ENCODE measurements at regions of chr10 and their contacts with region 1.

Region 1: GRCh38 chr10:45249978-45250693 is 65.3 kb downstream of the OR13A1 start:
- DNase-seq: no peak
- ATAC-seq: peak; percentile 78
- H3K4me3 Mint-ChIP-seq: peak overlapping the region; percentile 73
- H3K27ac Mint-ChIP-seq: peak overlapping the region; percentile 92
- H3K4me1 Mint-ChIP-seq: peaks cover 3% of the 10 kb centered on the region; the same call in 1 of the 2 replicates
- H3K27me3 Mint-ChIP-seq: peaks cover 14% of the 10 kb centered on the region
- CTCF ChIP-seq: peak; percentile 62

Region 2: DNA sequence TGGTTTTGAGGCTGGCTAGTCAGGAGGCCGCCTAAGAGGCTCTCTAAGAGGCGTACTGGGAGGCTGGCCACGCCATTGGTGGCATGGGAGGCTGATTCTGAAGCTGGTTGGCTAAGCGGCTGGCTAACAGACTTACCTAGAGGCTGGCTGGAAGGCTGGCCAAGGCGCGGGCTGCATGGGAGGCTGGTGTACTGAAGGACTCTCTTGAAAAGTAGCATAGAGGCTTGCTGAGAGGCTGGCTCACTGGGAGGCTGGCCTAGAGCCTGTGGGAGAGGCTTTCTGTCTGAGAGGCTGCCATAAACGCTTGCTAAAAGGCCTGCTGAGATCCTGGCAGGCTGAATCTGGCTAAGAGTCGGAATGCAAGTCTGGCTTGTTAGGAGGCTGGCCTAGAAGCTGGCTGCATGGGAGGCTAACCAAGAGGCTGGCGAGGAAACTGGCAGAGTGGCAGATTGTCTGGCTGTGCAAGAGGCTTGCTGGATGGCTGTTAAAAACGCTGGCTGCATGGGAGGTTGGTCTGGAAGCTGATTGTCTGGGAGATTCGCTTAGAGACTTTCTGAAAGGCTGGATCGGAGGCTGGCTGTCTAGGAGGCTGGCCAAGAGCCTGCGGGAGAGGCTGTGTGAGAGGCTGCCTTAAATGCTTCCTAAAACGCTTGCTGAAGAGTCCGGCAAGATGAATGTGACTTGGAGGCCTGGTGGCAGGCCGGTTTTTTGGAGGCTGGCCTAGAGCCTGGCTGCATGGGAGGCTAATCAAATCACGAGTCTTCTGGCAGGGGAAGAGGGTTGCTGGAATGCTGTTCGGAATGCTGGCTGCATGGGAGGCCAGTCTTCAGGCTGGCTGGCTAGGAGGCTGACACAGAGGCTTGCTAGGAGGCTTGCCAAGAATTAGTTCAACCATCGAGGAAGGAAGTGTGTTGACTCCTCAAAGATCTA is 68.9 kb before region 1 on chr10:
- CTCF ChIA-PET with region 1: no interaction called
- POLR2A ChIA-PET with region 1: no interaction called
- DNase-seq: no peak
- ATAC-seq: no peak
- H3K4me3 Mint-ChIP-seq: no peak overlapping the region
- H3K27ac Mint-ChIP-seq: no peak overlapping the region
- H3K4me1 Mint-ChIP-seq: no peaks in the 10 kb centered on the region
- H3K27me3 Mint-ChIP-seq: no peaks in the 10 kb centered on the region
- CTCF ChIP-seq: no peak

Region 3: GRCh38 chr10:45235798-45236231 is 14.3 kb before region 1 on chr10:
- CTCF ChIA-PET with region 1: interaction called, 11 read pairs
- POLR2A ChIA-PET with region 1: no interaction called
- DNase-seq: no peak
- ATAC-seq: no peak
- H3K4me3 Mint-ChIP-seq: no peak overlapping the region
- H3K27ac Mint-ChIP-seq: no peak overlapping the region
- H3K4me1 Mint-ChIP-seq: peaks cover under 1% of the 10 kb centered on the region; the same call in 1 of the 2 replicates
- H3K27me3 Mint-ChIP-seq: no peaks in the 10 kb centered on the region
- CTCF ChIP-seq: no peak

Region 4: GRCh38 chr10:45261946-45262345 is 11.8 kb after region 1 on chr10:
- CTCF ChIA-PET with region 1: interaction called, 13 read pairs
- POLR2A ChIA-PET with region 1: no interaction called
- DNase-seq: no peak
- ATAC-seq: no peak
- H3K4me3 Mint-ChIP-seq: no peak overlapping the region
- H3K27ac Mint-ChIP-seq: no peak overlapping the region
- H3K4me1 Mint-ChIP-seq: no peaks in the 10 kb centered on the region
- H3K27me3 Mint-ChIP-seq: no peaks in the 10 kb centered on the region; the same call in 1 of the 2 replicates
- CTCF ChIP-seq: no peak

Region 5: GRCh38 chr10:45373576-45374349 is 123.6 kb after region 1 on chr10 and contains the start of gene ALOX5:
- CTCF ChIA-PET with region 1: no interaction called
- POLR2A ChIA-PET with region 1: no interaction called
- DNase-seq: peak; percentile 71
- ATAC-seq: peak; percentile 74
- H3K4me3 Mint-ChIP-seq: peak within 1 kb of the TSS; percentile 82
- H3K27ac Mint-ChIP-seq: no peak within 1 kb of the TSS
- H3K4me1 Mint-ChIP-seq: peaks cover 17% of the 10 kb centered on the region
- H3K27me3 Mint-ChIP-seq: peaks cover 69% of the 10 kb centered on the region
- CTCF ChIP-seq: no peak
- total RNA-seq, gene ALOX5: 3.4 to 4.9 TPM (median 4.4 TPM) in 3 replicates

Region 6: GRCh38 chr10:45442662-45443061 is 192.5 kb after region 1 on chr10:
- CTCF ChIA-PET with region 1: interaction called, 12 read pairs
- POLR2A ChIA-PET with region 1: no interaction called
- DNase-seq: peak; percentile 50
- ATAC-seq: peak; percentile 86
- H3K4me3 Mint-ChIP-seq: no peak overlapping the region
- H3K27ac Mint-ChIP-seq: no peak overlapping the region
- H3K4me1 Mint-ChIP-seq: peaks cover 22% of the 10 kb centered on the region
- H3K27me3 Mint-ChIP-seq: no peaks in the 10 kb centered on the region
- CTCF ChIP-seq: no peak